Endothelial cell of umbilical vein (primary cell): ENCODE measurements at regions of chr11 and their contacts with region 1.

Region 1: GRCh38 chr11:114280696-114281095 is 15.5 kb upstream of the NNMT start:
- DNase-seq: peak; percentile 90
- H3K4me3 ChIP-seq: no peak overlapping the region
- H3K27ac ChIP-seq: peak overlapping the region; percentile 40
- H3K4me1 ChIP-seq: peaks cover 25% of the 10 kb centered on the region
- H3K27me3 ChIP-seq: peaks cover 0 to 8% of the 10 kb centered on the region in 2 experiments
- CTCF ChIP-seq: peak; percentile 71 to 80
- POLR2A ChIP-seq: no peak

Region 2: DNA sequence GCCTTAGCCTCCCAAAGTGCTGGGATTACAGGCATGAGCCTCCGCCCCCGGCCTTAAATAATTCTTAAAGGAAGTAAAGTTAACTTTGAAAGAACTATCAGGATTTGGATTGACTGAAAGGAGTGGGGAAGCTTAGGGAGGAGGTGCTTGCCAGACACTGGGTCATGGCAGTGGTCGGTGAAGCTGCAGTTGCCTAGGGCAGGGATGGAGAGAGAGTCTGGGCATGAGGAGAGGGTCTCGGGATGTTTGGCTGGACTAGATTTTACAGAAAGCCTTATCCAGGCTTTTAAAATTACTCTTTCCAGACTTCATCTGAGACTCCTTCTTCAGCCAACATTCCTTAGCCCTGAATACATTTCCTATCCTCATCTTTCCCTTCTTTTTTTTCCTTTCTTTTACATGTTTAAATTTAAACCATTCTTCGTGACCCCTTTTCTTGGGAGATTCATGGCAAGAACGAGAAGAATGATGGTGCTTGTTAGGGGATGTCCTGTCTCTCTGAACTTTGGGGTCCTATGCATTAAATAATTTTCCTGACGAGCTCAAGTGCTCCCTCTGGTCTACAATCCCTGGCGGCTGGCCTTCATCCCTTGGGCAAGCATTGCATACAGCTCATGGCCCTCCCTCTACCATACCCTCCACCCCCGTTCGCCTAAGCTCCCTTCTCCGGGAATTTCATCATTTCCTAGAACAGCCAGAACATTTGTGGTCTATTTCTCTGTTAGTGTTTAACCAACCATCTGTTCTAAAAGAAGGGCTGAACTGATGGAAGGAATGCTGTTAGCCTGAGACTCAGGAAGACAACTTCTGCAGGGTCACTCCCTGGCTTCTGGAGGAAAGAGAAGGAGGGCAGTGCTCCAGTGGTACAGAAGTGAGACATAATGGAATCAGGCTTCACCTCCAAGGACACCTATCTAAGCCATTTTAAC is 15.2 kb after region 1 on chr11 and contains the start of gene NNMT:
- CTCF ChIA-PET with region 1: interaction called, 27 read pairs
- POLR2A ChIA-PET with region 1: interaction called, 3 read pairs
- dilution Hi-C with region 1: no loop called
- intact Hi-C with region 1: loop called (anchors 1 kb)
- DNase-seq: peak; percentile 97
- H3K4me3 ChIP-seq: peak within 1 kb of the TSS; percentile 85 to 99 (median 96)
- H3K27ac ChIP-seq: peak within 1 kb of the TSS; percentile 100
- H3K4me1 ChIP-seq: peaks cover 70% of the 10 kb centered on the region
- H3K27me3 ChIP-seq: no peaks in the 10 kb centered on the region
- CTCF ChIP-seq: peak in 1 of 2 donors; percentile 11
- POLR2A ChIP-seq: peak; percentile 86
- total RNA-seq, gene NNMT: 300 and 330 TPM in 2 replicates

Region 3: DNA sequence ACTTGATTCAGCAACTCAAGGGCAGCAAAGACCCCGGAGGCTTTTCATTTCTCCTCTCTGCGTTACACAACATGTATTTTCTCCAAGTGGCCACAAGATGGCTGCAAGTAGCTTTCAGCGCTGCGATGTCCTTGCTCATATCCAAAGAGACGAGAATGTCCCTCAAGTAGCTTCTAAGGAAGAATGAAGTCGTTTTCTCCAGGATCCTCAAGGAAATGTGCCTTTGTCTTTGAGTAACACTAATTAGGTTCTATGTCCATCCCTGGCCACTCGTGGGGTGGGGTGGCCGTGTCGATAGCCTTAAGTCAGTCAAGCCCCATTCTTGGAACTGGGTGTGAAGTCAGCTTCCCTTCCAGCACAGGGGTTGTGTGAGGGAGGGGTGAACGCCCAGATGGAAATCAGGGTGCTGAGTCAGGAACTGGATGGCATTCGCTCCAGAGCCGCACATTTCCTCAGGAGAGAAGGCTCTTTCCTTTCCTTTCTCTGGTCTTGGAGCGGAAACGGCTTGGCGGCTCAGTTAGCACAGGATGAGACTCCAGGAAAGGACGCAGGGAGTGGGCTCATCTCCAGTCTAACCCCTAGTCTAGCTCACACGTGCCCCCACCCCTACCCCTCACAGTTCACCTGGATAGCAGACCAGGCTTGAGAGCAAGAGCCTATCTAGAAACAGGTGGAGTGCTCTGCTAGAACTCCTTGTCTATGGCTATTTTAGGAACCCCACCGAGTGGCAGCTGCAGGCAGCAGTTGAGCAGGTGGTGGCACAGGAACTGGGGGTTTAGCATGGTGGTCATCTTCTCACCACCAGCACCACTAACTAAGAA is 59.8 kb after region 1 on chr11:
- CTCF ChIA-PET with region 1: interaction called, 41 read pairs
- POLR2A ChIA-PET with region 1: no interaction called
- dilution Hi-C with region 1: no loop called
- intact Hi-C with region 1: loop called (anchors 1 kb)
- DNase-seq: peak; percentile 86
- H3K4me3 ChIP-seq: peak overlapping the region in 2 of 3 experiments; percentile 22 to 60
- H3K27ac ChIP-seq: peak overlapping the region; percentile 30
- H3K4me1 ChIP-seq: peaks cover 6% of the 10 kb centered on the region
- H3K27me3 ChIP-seq: no peaks in the 10 kb centered on the region
- CTCF ChIP-seq: peak; percentile 73 to 74
- POLR2A ChIP-seq: no peak

Region 4: DNA sequence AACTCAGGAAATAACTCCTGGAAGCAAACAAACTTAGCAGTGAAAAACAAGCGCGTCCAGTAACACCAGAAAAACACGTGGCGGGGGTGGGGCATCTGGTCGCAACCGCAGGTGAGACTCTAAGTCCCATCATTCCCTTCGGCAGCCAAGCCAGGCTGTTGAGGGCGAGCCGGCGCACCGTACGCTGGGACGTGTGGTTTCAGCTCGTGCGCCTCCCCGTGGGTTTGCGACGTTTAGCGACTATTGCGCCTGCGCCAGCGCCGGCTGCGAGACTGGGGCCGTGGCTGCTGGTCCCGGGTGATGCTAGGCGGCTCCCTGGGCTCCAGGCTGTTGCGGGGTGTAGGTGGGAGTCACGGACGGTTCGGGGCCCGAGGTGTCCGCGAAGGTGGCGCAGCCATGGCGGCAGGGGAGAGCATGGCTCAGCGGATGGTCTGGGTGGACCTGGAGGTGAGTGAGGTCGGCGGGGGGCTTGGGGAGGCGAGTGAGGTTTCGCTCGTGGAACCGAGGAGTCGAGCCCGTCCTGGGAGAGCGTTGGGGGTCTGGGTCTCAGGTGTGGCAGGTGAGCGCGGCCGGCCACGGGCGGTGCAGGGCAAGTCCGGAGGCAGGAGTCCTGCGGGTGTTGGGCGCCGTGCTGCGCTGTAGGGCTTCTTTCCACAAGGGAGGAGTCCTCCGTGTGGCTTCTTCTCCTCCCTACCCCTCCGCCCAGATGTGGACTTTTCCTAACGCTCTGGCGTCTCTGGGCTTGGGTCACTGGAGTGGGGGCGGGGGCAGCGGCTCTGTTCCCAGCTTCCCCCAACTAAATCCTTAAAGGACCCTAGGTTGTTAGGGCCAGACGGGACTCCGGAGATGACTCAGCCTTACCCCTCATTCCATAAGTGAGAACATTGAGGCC is 158.8 kb after region 1 on chr11 and contains the start of gene REXO2:
- CTCF ChIA-PET with region 1: interaction called, 7 read pairs
- POLR2A ChIA-PET with region 1: no interaction called
- dilution Hi-C with region 1: no loop called
- intact Hi-C with region 1: loop called (anchors 1 kb)
- DNase-seq: peak; percentile 96
- H3K4me3 ChIP-seq: peak within 1 kb of the TSS; percentile 49 to 97 (median 83)
- H3K27ac ChIP-seq: peak within 1 kb of the TSS; percentile 36
- H3K4me1 ChIP-seq: peaks cover 23% of the 10 kb centered on the region
- H3K27me3 ChIP-seq: no peaks in the 10 kb centered on the region
- CTCF ChIP-seq: peak in 1 of 2 donors; percentile 43
- POLR2A ChIP-seq: peak; percentile 83
- total RNA-seq, gene REXO2: 155 and 182 TPM in 2 replicates

Region 5: DNA sequence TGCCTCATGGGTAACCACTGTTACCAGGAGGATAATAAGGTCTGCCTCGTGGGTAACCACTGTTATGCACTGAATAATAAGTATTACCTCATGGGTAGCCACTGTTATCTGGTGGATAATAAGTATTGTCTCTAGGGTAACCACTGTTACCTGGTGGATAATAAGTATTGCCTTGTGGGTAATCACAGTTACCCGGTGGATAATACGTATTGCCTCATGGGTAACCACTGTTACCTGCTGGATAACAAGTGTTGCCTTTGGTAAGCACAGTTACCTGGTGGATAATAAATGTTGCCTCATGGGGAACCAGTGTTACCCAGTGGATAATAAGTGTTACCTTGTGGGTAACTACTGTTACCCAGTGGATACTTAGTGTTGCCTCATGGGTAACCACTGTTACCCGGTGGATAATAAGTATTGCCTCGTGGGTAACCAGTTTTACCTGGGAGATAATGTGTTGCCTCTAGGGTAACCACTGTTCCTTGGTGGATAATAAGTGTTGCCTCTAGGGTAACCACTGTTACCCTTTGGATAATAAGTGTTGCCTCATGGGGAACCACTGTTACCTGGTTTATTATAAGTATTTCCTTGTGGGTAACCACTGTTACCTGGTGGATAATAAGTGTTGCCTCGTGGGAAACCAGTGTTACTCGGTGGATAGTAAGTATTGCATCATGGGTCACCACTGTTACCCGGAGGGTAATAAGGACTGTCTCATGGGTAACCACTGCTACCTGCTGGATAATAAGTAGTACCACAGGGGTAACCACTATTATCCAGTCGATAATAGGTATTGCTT is 325.5 kb after region 1 on chr11:
- CTCF ChIA-PET with region 1: no interaction called
- POLR2A ChIA-PET with region 1: no interaction called
- dilution Hi-C with region 1: no loop called
- intact Hi-C with region 1: loop called (anchors 2 kb)
- DNase-seq: no peak
- H3K4me3 ChIP-seq: no peak overlapping the region
- H3K27ac ChIP-seq: no peak overlapping the region
- H3K4me1 ChIP-seq: no peaks in the 10 kb centered on the region
- H3K27me3 ChIP-seq: no peaks in the 10 kb centered on the region
- CTCF ChIP-seq: no peak
- POLR2A ChIP-seq: no peak

Region 6: GRCh38 chr11:115170133-115170815 is 889.6 kb after region 1 on chr11:
- CTCF ChIA-PET with region 1: no interaction called
- POLR2A ChIA-PET with region 1: no interaction called
- dilution Hi-C with region 1: no loop called
- intact Hi-C with region 1: loop called (anchors 5 kb)
- DNase-seq: peak; percentile 18
- H3K4me3 ChIP-seq: no peak overlapping the region
- H3K27ac ChIP-seq: no peak overlapping the region
- H3K4me1 ChIP-seq: no peaks in the 10 kb centered on the region
- H3K27me3 ChIP-seq: no peaks in the 10 kb centered on the region
- CTCF ChIP-seq: peak; percentile 49 to 51
- POLR2A ChIP-seq: no peak